Cardiac septum (tissue), 1 donor: ENCODE measurements at regions of chr5 and their contacts with region 1.

Region 1: GRCh38 chr5:142356716-142357473 is 32.1 kb upstream of the SPRY4 start:
- DNase-seq: peak; percentile 94

Region 2: DNA sequence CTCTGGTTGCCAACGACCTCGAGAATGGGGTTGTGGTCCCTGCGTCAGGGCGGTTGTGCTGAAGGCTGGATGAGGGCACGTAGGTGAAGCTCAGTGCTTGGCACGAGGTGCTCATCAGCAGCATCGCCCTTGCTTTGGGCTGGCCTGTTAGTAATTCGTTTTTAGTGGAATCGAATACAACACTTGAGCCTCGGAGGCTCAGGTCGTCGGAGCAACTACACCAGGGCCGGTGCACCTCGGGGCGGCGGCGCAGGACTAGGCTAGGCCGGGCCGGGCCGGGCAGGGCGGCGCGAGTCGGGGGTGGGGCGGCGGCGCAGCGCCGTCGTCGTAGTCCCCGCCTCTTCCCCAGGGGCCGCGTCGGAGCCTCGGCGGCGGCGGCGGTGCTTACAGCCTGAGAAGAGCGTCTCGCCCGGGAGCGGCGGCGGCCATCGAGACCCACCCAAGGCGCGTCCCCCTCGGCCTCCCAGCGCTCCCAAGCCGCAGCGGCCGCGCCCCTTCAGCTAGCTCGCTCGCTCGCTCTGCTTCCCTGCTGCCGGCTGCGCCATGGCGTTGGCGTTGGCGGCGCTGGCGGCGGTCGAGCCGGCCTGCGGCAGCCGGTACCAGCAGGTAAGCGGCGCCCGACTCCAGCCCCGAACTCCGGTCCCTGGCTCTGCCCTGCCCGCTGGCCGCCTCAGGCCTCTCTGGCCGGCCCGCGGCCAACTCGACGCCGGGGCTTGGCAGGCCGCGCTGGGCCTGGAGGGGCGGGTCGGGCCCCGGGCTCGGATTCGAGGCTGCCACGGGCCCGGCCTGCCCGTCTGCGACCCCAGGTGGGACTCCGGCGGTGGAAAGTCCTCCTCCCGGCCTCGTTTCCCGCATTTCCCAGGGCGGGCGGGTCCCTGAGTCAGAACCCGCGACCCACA is 248.2 kb before region 1 on chr5 and contains the start of gene NDFIP1:
- intact Hi-C with region 1: no loop called
- DNase-seq: peak; percentile 93
- total RNA-seq, gene NDFIP1: 58.8 TPM

Region 3: DNA sequence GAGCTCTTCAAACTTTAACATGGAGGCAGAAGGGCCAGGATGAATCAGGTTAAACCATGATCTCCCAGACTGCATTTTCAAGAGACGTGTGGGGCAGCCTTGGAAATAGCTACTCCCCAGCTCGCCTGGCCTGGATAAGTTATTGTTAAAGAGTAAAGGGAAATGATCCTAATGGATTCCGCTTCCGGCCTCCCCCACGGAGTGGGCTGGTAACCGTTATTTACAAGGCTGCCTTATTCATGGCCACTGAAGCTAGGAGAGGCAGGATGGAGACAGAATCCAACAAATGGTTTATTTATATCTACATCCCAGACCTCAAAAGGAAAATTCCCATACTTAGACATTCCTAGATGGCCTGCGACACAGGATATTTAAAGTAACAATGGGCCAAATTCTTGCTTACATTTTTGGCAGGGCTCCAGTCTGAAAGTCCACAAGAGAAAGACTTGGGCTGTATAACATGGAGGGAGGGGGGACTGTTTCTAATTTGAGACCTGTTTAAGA is 59.9 kb before region 1 on chr5:
- intact Hi-C with region 1: loop called (anchors 1 kb)
- DNase-seq: no peak

Region 4: DNA sequence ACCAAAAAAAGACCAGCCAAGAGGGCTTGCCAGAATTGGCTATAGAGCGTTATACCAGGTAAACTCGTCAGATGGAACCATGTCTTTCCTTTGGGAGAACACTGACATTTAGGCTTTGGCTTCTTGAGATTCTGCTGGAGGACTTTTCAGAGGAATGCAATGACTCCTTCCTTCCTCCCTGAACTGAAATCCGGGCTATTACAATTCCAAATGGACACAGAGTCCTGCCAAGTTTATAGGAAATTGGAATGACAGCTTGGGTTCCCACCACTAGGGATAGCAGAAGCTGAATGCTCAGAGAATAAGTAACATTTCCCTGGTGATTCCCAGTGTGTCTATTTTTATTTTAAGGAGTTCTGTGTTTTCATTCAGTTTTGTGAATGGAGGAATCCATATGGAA is 186.0 kb after region 1 on chr5:
- intact Hi-C with region 1: loop called (anchors 2 kb)
- DNase-seq: no peak